Activated CD4-positive, alpha-beta memory T cell treated with anti-CD3 and anti-CD28 coated beads, Interleukin-2, amount 10 ng/mL, durations not matched to agents 7 days and 5 days (primary cell): ENCODE measurements at regions of chr1 and their contacts with region 1.

Region 1: GRCh38 chr1:172826096-172826743 is 167.3 kb downstream of the FASLG start:
- DNase-seq: no peak
- H3K4me3 Mint-ChIP-seq: no peak overlapping the region
- H3K27ac Mint-ChIP-seq: no peak overlapping the region
- H3K4me1 Mint-ChIP-seq: peaks cover 1% of the 10 kb centered on the region
- H3K27me3 Mint-ChIP-seq: peaks cover 23% of the 10 kb centered on the region

Region 2: GRCh38 chr1:172588296-172589291 is 237.6 kb before region 1 on chr1:
- CTCF ChIA-PET with region 1: no interaction called
- POLR2A ChIA-PET with region 1: no interaction called
- DNase-seq: peak; percentile 21
- H3K4me3 Mint-ChIP-seq: no peak overlapping the region
- H3K27ac Mint-ChIP-seq: peak overlapping the region; percentile 53
- H3K4me1 Mint-ChIP-seq: peaks cover 24% of the 10 kb centered on the region
- H3K27me3 Mint-ChIP-seq: no peaks in the 10 kb centered on the region

Region 3: GRCh38 chr1:172745014-172745413 is 81.2 kb before region 1 on chr1:
- CTCF ChIA-PET with region 1: interaction called, 12 read pairs
- POLR2A ChIA-PET with region 1: no interaction called
- DNase-seq: peak; percentile 34
- H3K4me3 Mint-ChIP-seq: no peak overlapping the region
- H3K27ac Mint-ChIP-seq: no peak overlapping the region
- H3K4me1 Mint-ChIP-seq: peaks cover 26% of the 10 kb centered on the region
- H3K27me3 Mint-ChIP-seq: peaks cover 64% of the 10 kb centered on the region

Region 4: GRCh38 chr1:173202430-173203145 is 376.4 kb after region 1 on chr1:
- CTCF ChIA-PET with region 1: interaction called, 29 read pairs
- POLR2A ChIA-PET with region 1: interaction called, 6 read pairs
- DNase-seq: no peak
- H3K4me3 Mint-ChIP-seq: no peak overlapping the region
- H3K27ac Mint-ChIP-seq: no peak overlapping the region
- H3K4me1 Mint-ChIP-seq: peaks cover 30% of the 10 kb centered on the region
- H3K27me3 Mint-ChIP-seq: peaks cover 26% of the 10 kb centered on the region